ENCODE measurements at regions of chr4 and their contacts with region 1.

Region 1: DNA sequence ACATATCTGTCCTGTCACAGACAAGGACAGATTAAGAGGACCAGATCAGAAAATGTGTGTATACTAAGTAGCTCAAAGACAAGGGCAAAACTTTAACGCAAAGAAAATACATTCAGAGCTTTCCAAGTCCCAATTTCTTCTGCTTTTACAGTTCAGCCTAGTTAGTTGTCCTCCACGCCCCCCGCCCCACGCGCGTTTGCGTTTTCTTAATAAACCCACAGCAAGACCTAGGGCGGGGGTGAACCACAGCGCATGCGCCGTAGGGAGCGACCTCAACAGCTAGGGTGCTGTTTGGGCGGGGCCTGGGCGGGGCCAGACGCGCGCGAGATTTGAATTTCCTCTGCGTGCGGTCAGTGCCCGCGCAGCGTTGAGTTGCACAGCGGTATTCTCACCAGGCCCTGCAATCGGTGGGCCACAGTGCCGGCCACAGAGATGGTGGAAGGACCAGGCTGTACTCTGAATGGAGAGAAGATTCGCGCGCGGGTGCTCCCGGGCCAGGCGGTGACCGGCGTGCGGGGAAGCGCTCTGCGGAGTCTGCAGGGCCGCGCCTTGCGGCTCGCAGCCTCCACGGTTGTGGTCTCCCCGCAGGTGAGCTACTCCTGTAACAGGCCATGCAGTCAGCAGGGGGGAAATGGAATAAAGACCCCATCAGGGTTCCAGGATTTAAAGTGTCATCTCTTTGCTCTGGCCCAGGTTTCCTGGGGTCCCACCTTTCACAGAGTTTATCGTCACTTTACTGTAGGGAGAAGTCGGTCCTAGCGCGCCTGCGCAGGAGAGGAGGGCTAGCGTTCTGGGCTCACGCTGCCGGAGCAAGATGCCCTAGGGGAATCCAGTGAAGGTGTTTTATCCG is at the start of gene NEIL3:
- DNase-seq: peak; percentile 82
- ATAC-seq: peak; percentile 92
- H3K4me3 ChIP-seq: peak within 1 kb of the TSS; percentile 87
- H3K27ac ChIP-seq: peak within 1 kb of the TSS; percentile 45
- H3K4me1 ChIP-seq: peaks cover 32% of the 10 kb centered on the region
- H3K27me3 ChIP-seq: no peaks in the 10 kb centered on the region
- CTCF ChIP-seq: no peak
- total RNA-seq, gene NEIL3: 10.2 and 13.2 TPM in 2 replicates

Region 2: GRCh38 chr4:177057186-177057585 is 252.6 kb before region 1 on chr4:
- CTCF ChIA-PET with region 1: no interaction called
- POLR2A ChIA-PET with region 1: interaction called, 14 read pairs
- intact Hi-C with region 1: no loop called
- DNase-seq: no peak
- ATAC-seq: no peak
- H3K4me3 ChIP-seq: no peak overlapping the region
- H3K27ac ChIP-seq: no peak overlapping the region
- H3K4me1 ChIP-seq: no peaks in the 10 kb centered on the region
- H3K27me3 ChIP-seq: no peaks in the 10 kb centered on the region
- CTCF ChIP-seq: no peak